A673 (cell line): ENCODE measurements at regions of chr16 and their contacts with region 1.

Region 1: DNA sequence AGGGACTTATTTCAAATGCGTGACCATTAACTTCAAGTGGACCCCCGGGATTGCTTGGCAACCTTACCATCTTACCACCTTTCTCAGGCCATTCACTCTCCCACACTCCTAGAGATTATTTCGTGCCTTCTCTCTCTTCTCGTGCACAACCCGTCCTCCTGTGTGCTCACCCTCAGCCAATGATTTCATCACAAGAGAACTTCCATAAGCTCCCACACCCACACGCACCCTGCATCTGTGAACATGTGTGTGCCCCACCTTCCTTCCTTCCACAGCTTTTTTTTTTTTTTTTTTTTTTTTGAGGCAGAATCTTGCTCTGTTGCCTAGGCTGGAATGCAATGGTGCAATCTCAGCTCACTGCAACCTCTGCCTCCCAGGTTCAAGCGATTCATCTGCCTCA is 27.4 kb upstream of the CDH3 start:
- DNase-seq: no peak
- H3K4me3 ChIP-seq: no peak overlapping the region
- H3K27ac ChIP-seq: no peak overlapping the region
- H3K4me1 ChIP-seq: no peaks in the 10 kb centered on the region
- H3K27me3 ChIP-seq: no peaks in the 10 kb centered on the region
- CTCF ChIP-seq: no peak

Region 2: GRCh38 chr16:68499006-68499405 is 118.7 kb before region 1 on chr16:
- CTCF ChIA-PET with region 1: no interaction called
- POLR2A ChIA-PET with region 1: no interaction called
- intact Hi-C with region 1: no loop called
- DNase-seq: peak; percentile 27
- H3K4me3 ChIP-seq: no peak overlapping the region
- H3K27ac ChIP-seq: no peak overlapping the region
- H3K4me1 ChIP-seq: no peaks in the 10 kb centered on the region
- H3K27me3 ChIP-seq: peaks cover 10% of the 10 kb centered on the region
- CTCF ChIP-seq: no peak

Region 3: GRCh38 chr16:69112285-69113129 is 494.8 kb after region 1 on chr16:
- CTCF ChIA-PET with region 1: interaction called, 11 read pairs
- POLR2A ChIA-PET with region 1: no interaction called
- intact Hi-C with region 1: no loop called
- DNase-seq: peak; percentile 48
- H3K4me3 ChIP-seq: no peak overlapping the region
- H3K27ac ChIP-seq: no peak overlapping the region
- H3K4me1 ChIP-seq: no peaks in the 10 kb centered on the region
- H3K27me3 ChIP-seq: no peaks in the 10 kb centered on the region
- CTCF ChIP-seq: peak; percentile 95